HCT116 (cell line): ENCODE measurements at regions of chr17 and their contacts with region 1.

Region 1: GRCh38 chr17:81094509-81095382 is 59.8 kb downstream of the BAIAP2 start:
- DNase-seq: peak; percentile 99
- ATAC-seq: peak; percentile 68
- H3K4me3 ChIP-seq: peak overlapping the region; percentile 1 to 31; a peak in 3 of 4 replicates
- H3K27ac ChIP-seq: peak overlapping the region; percentile 95
- H3K4me1 ChIP-seq: peaks cover 79 to 97% of the 10 kb centered on the region in 2 experiments
- H3K27me3 ChIP-seq: no peaks in the 10 kb centered on the region
- CTCF ChIP-seq: peak in 2 of 3 experiments; percentile 20 to 27; a peak in 2 of 6 replicates
- POLR2A ChIP-seq: no peak
- RAD21 ChIP-seq: no peak

Region 2: GRCh38 chr17:80297996-80298560 is 796.7 kb before region 1 on chr17:
- CTCF ChIA-PET with region 1: no interaction called
- POLR2A ChIA-PET with region 1: no interaction called
- RAD21 ChIA-PET with region 1: no interaction called
- intact Hi-C with region 1: no loop called
- DNase-seq: no peak
- ATAC-seq: no peak
- H3K4me3 ChIP-seq: no peak overlapping the region
- H3K27ac ChIP-seq: no peak overlapping the region
- H3K4me1 ChIP-seq: no peaks in the 10 kb centered on the region
- H3K27me3 ChIP-seq: no peaks in the 10 kb centered on the region
- CTCF ChIP-seq: no peak
- POLR2A ChIP-seq: no peak
- RAD21 ChIP-seq: no peak

Region 3: GRCh38 chr17:81025741-81026129 is 69.0 kb before region 1 on chr17:
- CTCF ChIA-PET with region 1: interaction called, 34 read pairs
- POLR2A ChIA-PET with region 1: no interaction called
- RAD21 ChIA-PET with region 1: interaction called, 6 read pairs
- intact Hi-C with region 1: no loop called
- DNase-seq: no peak
- ATAC-seq: no peak
- H3K4me3 ChIP-seq: no peak overlapping the region
- H3K27ac ChIP-seq: no peak overlapping the region
- H3K4me1 ChIP-seq: peaks cover 13 to 18% of the 10 kb centered on the region in 2 experiments; a peak in 3 of 4 replicates
- H3K27me3 ChIP-seq: no peaks in the 10 kb centered on the region
- CTCF ChIP-seq: no peak
- POLR2A ChIP-seq: no peak
- RAD21 ChIP-seq: no peak

Region 4: GRCh38 chr17:81049973-81050551 is 44.7 kb before region 1 on chr17:
- CTCF ChIA-PET with region 1: interaction called, 5 read pairs
- POLR2A ChIA-PET with region 1: interaction called, 3 read pairs
- RAD21 ChIA-PET with region 1: no interaction called
- intact Hi-C with region 1: loop called (anchors 2 kb)
- DNase-seq: peak; percentile 91
- ATAC-seq: peak; percentile 95
- H3K4me3 ChIP-seq: peak overlapping the region; percentile 46 to 59
- H3K27ac ChIP-seq: peak overlapping the region; percentile 94
- H3K4me1 ChIP-seq: peaks cover 49 to 73% of the 10 kb centered on the region in 2 experiments
- H3K27me3 ChIP-seq: no peaks in the 10 kb centered on the region
- CTCF ChIP-seq: peak in 1 of 3 experiments; percentile 4; a peak in 1 of 6 replicates
- POLR2A ChIP-seq: no peak
- RAD21 ChIP-seq: no peak